Activated T-helper 1 cell treated with anti-CD3 and anti-CD28 coated beads, Interleukin-12 subunit alpha, Interleukin-12 subunit beta, Interleukin-2, Interleukin-4 antibody, amounts not matched to agents 30 ng/mL and 10 ng/mL and 1 ng/mL, durations not matched to agents 14 hours and 24 hours and 36 hours (primary cell): ENCODE measurements at regions of chr12 and their contacts with region 1.

Region 1: DNA sequence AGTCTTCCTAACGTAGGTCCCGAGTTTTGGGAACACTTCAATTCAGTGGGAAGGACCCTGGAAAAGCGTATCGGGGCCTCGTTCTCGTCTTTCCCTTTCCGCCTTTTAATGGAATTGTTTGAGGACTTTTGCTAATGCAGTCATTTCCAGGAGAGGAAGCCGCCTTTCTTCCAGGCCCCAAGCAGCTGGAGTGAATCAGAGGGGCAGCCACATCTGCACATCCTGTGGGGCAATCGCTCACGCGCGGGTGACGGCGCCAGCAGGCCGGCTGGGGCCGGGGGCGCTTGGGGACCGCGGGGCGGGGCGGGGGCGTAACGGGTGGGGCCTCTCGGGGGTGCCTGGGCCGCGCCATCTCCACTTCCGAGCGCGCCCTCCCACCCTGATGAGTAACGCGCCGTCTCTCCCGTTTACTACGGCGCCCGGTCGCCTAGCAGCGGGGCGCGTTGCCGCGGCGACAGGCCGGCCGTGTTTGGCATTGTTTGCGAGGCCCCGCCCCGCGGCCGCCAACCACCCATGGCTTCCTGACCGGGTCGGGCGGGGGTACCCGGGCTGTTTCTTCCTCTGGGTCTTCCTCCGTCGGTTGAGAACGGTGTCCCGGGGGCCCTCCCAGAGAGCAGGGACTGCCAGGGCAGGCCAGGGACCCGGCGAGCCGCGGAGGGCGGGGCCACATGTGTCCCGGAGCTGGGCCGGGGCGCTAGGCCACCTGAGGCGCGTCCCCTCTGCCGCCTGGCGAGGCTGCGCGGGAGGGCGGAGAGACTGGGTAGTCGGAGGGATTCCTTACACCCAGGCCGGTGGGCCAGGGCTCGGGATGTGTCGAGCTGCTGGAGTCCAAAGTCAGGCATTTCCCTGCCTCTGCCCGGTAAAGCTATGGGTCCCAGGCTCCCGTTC is 2.3 kb downstream of the GSG1 start:
- DNase-seq: peak; percentile 90
- H3K4me3 Mint-ChIP-seq: peak overlapping the region; percentile 74
- H3K27ac Mint-ChIP-seq: peak overlapping the region; percentile 89
- H3K4me1 Mint-ChIP-seq: peaks cover 43% of the 10 kb centered on the region
- H3K27me3 Mint-ChIP-seq: peaks cover 5% of the 10 kb centered on the region

Region 2: GRCh38 chr12:12813120-12814101 is 287.7 kb before region 1 on chr12 and contains the start of gene DDX47:
- intact Hi-C with region 1: loop called (anchors 10 kb)
- DNase-seq: peak; percentile 94
- H3K4me3 Mint-ChIP-seq: peak within 1 kb of the TSS; percentile 85
- H3K27ac Mint-ChIP-seq: peak within 1 kb of the TSS; percentile 81
- H3K4me1 Mint-ChIP-seq: peaks cover 52% of the 10 kb centered on the region
- H3K27me3 Mint-ChIP-seq: no peaks in the 10 kb centered on the region
- total RNA-seq, gene DDX47: 120 and 127 TPM in 2 replicates

Region 3: DNA sequence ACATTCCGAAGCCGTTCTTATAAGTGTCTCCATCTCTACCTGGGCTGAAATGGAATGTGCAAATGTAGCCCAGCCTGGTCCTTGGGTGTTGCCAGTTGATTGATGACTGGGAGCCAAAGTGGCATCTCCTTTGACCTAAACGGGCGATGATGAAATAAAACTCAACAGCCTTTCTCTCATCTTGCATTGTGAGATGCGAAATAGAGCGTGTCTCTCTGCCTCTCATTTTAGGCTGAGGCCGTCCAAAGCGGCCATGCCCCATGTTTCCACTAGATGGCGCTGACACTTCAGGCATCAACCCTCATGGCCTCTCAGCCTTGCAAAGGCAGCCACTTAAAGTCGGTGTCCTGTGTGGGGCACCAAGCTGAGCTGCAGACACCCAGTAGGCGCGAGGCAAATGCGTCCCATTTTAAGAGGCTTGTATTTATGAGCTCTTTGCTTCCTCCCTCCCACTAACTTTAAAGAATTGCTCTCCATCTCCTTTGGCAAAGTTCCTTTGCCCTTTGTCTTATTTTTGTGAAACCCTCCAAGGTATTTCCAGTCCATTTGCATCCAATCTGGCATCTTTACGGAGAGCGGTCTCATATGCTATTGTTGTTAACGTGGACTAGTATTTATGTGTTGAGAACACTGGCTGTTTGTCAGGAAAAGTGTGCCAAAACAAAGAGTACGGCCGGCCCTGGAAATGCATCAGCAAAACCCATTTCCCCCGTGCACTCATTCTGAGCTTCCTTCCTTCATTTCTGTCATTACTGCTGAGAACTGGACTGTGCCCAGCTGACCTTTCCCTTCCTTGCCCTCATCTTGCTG is 184.8 kb before region 1 on chr12:
- intact Hi-C with region 1: loop called (anchors 1 kb)
- DNase-seq: peak; percentile 76
- H3K4me3 Mint-ChIP-seq: no peak overlapping the region
- H3K27ac Mint-ChIP-seq: no peak overlapping the region
- H3K4me1 Mint-ChIP-seq: peaks cover 11% of the 10 kb centered on the region
- H3K27me3 Mint-ChIP-seq: peaks cover 14% of the 10 kb centered on the region

Region 4: GRCh38 chr12:13044002-13044905 is 56.9 kb before region 1 on chr12 and contains the start of gene FAM234B:
- intact Hi-C with region 1: loop called (anchors 1 kb)
- DNase-seq: peak; percentile 62
- H3K4me3 Mint-ChIP-seq: peak within 1 kb of the TSS; percentile 83
- H3K27ac Mint-ChIP-seq: peak within 1 kb of the TSS; percentile 66
- H3K4me1 Mint-ChIP-seq: peaks cover 4% of the 10 kb centered on the region
- H3K27me3 Mint-ChIP-seq: peaks cover 19% of the 10 kb centered on the region
- total RNA-seq, gene FAM234B: 6.0 and 6.6 TPM in 2 replicates

Region 5: DNA sequence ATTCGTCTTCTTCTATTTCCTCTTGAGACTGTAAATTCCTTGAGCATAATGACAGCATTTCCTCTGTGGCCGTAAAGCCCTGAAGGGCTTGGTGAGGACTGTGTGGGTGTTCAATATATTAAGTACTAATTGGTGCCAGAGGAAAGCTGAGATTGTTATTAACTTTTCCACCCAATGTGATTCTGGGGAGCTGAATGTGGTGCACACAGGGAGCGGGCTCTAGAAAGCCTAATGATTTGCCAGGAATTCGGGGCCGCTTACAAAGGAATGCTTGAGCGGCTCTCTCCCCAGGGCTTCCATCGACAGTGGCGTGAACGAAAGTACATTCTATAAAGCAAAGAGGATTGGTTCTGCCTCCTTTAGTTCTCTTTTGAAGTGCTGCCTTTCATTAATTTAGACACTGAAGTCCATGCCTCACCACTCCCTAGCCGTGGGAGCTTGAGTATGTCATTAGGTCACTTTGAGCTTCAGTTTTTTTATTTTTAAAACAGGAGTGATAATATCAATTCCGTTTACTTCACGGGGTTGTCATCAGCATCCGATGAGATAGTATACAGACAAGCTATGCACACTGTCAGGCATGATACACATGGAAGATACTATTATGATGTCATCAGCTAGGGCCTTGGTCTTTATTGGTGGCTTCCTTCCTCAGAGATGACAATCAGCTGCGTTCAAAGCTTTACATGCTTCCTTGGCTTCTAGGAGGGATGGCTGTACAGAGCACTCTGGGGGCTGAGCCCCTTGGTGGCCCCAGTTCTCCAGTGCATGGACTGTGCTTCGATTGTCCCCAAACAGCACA is 13.3 kb after region 1 on chr12:
- intact Hi-C with region 1: no loop called
- DNase-seq: no peak
- H3K4me3 Mint-ChIP-seq: no peak overlapping the region
- H3K27ac Mint-ChIP-seq: no peak overlapping the region
- H3K4me1 Mint-ChIP-seq: no peaks in the 10 kb centered on the region
- H3K27me3 Mint-ChIP-seq: peaks cover 30% of the 10 kb centered on the region

Region 6: GRCh38 chr12:13173012-13173932 is 72.1 kb after region 1 on chr12:
- intact Hi-C with region 1: loop called (anchors 2 kb)
- DNase-seq: peak; percentile 12
- H3K4me3 Mint-ChIP-seq: no peak overlapping the region
- H3K27ac Mint-ChIP-seq: peak overlapping the region; percentile 51
- H3K4me1 Mint-ChIP-seq: peaks cover 25% of the 10 kb centered on the region
- H3K27me3 Mint-ChIP-seq: peaks cover 41% of the 10 kb centered on the region

Region 7: DNA sequence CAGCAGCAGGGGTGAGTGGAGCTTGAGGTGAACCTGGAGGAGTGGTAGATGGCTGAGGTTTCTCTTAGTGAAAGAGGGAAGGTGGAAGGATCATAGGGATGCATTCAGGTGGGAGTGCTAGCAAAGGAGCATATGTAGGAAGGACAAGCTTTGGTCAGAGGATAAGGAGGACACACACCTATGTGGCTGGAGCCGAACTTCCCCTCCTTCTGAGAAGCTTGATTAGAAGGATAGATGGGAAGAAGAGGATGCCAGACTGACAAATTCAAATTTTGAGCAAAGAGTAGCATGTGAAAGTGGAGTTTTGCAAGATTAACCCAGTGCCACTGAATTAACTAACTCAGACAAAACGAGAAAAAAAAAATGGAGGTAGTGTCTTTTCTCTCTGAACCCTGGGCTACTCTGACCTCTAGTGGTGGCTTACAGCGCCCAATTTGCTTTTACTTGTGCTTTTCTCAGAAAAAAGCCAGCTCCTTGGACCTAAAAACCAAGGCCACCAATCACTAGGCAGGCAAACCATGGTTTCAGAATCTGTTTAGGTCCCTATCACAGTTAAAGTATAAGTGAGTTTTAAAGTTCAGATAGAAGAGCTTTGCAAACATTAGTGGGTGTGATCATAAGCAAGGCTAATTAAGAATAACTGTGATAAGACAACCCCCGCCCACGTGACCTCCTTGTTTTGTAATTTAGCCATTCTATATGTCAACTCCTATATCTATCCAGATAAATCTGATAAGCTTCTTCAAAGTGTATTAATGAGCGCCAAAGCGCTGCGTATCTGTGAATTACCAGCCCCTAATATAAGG is 110.9 kb after region 1 on chr12:
- intact Hi-C with region 1: loop called (anchors 1 kb)
- DNase-seq: peak; percentile 62
- H3K4me3 Mint-ChIP-seq: no peak overlapping the region
- H3K27ac Mint-ChIP-seq: peak overlapping the region; percentile 41
- H3K4me1 Mint-ChIP-seq: peaks cover 53% of the 10 kb centered on the region
- H3K27me3 Mint-ChIP-seq: no peaks in the 10 kb centered on the region

Region 8: DNA sequence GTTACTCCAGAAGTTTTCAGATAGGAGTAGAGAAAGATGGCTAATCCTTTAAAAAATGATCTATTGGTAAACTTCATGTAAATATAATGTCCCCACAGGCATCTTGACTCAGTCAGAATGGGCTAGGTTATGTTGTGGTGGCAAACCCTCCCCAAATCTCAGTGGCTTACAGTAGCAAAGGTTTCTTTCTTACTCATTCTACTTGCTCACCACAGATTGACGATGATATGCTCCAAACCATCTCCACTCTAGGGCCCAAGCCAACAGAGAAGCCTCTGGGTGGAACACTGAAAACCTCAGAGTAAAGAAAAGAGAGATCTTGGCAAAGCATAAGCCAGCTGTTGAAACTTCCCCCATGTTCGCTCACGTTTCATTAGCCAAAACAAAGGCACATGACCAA is 241.8 kb after region 1 on chr12:
- intact Hi-C with region 1: loop called (anchors 5 kb)
- DNase-seq: no peak
- H3K4me3 Mint-ChIP-seq: no peak overlapping the region
- H3K27ac Mint-ChIP-seq: no peak overlapping the region
- H3K4me1 Mint-ChIP-seq: peaks cover 12% of the 10 kb centered on the region
- H3K27me3 Mint-ChIP-seq: peaks cover 7% of the 10 kb centered on the region